Panc1 (cell line): ENCODE measurements at regions of chr11 and their contacts with region 1.

Region 1: DNA sequence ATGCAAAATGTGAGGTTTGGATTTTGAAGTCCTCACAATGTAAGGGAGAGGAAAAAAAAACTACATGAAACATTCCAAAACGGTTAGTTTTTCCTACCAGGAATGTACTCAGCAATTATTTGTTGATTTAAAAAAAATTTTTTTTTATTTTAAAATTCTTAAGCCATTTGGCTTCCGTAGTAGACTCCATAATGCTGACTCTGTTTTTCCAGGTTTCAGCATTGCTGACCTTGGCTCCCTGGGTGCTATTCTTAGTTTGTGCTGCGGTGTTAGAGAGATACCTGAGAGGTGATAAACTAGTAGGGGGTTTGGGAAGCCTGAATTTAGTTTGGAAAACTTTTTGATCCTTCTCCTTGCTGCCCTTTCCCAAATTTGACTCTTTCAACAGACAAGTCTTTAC is 10.6 kb downstream of the STT3A start:
- DNase-seq: no peak
- ATAC-seq: no peak
- H3K4me3 ChIP-seq: no peak overlapping the region
- H3K27ac ChIP-seq: no peak overlapping the region
- H3K4me1 ChIP-seq: no peaks in the 10 kb centered on the region
- H3K27me3 ChIP-seq: no peaks in the 10 kb centered on the region
- CTCF ChIP-seq: no peak

Region 2: GRCh38 chr11:125583496-125583895 is 19.7 kb before region 1 on chr11:
- CTCF ChIA-PET with region 1: no interaction called
- POLR2A ChIA-PET with region 1: no interaction called
- in situ Hi-C with region 1: no loop called
- intact Hi-C with region 1: no loop called
- DNase-seq: no peak
- ATAC-seq: no peak
- H3K4me3 ChIP-seq: no peak overlapping the region
- H3K27ac ChIP-seq: no peak overlapping the region
- H3K4me1 ChIP-seq: no peaks in the 10 kb centered on the region
- H3K27me3 ChIP-seq: no peaks in the 10 kb centered on the region
- CTCF ChIP-seq: no peak

Region 3: GRCh38 chr11:126135235-126136176 is 532.3 kb after region 1 on chr11:
- CTCF ChIA-PET with region 1: no interaction called
- POLR2A ChIA-PET with region 1: interaction called, 10 read pairs
- in situ Hi-C with region 1: no loop called
- intact Hi-C with region 1: no loop called
- DNase-seq: no peak
- ATAC-seq: no peak
- H3K4me3 ChIP-seq: no peak overlapping the region
- H3K27ac ChIP-seq: no peak overlapping the region
- H3K4me1 ChIP-seq: peaks cover 23% of the 10 kb centered on the region
- H3K27me3 ChIP-seq: peaks cover 4% of the 10 kb centered on the region
- CTCF ChIP-seq: no peak